A673 (cell line): ENCODE measurements at regions of chr2 and their contacts with region 1.

Region 1: DNA sequence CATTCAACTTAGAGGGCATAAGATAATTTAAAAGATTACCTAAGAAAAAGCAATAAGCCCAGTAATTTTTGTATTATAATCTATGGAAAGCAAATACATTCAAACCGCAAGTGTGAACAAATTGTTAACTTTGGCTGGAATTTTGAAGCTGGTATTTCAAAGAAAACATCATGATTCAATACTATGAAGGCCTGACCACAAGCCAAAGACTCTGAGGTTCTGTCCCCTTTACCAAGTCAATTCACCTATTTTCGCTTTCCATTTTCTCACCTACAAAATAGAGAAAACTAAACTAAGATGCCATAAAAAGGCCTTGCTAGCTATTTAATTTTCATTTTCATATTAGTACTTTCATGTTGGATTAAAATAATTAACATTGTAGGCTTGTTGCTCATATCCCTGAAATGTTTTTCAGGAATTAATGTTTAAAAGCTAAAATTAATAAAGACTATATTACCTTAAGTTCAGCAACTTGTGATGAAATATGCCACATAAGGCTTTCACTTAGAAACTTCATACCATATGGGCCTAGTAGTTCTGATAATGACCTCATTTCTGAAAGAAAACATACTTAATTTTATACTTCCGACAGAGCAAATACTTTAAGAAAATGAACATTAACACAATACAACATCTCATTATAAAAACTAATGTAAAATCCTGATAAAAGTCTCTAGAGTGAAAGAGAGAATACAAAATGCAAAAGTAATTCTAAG is 85.7 kb upstream of the FRZB start:
- DNase-seq: no peak
- H3K4me3 ChIP-seq: no peak overlapping the region
- H3K27ac ChIP-seq: peak overlapping the region; percentile 43
- H3K4me1 ChIP-seq: peaks cover 55% of the 10 kb centered on the region
- H3K27me3 ChIP-seq: no peaks in the 10 kb centered on the region
- CTCF ChIP-seq: no peak

Region 2: DNA sequence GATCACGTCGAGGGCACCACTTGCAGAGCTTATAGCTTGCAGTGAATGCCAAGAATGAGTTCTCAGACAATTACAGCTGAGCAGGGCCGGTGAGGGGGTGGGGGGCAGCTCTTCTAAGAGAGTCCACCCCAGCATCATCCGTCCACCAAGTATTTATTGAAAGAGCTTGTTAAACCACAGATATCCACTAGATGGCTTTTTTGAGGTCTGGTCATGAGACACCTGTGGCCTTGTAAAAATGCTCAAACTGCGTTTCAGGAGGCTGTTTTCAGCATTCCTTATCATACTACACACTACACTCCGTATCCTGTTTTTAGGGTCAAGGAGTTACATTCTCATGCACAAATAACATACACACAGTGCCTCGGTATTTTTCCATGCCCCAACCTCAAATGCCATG is 184.5 kb before region 1 on chr2:
- CTCF ChIA-PET with region 1: no interaction called
- POLR2A ChIA-PET with region 1: no interaction called
- intact Hi-C with region 1: no loop called
- DNase-seq: peak; percentile 43
- H3K4me3 ChIP-seq: no peak overlapping the region
- H3K27ac ChIP-seq: no peak overlapping the region
- H3K4me1 ChIP-seq: no peaks in the 10 kb centered on the region
- H3K27me3 ChIP-seq: no peaks in the 10 kb centered on the region
- CTCF ChIP-seq: peak; percentile 50

Region 3: DNA sequence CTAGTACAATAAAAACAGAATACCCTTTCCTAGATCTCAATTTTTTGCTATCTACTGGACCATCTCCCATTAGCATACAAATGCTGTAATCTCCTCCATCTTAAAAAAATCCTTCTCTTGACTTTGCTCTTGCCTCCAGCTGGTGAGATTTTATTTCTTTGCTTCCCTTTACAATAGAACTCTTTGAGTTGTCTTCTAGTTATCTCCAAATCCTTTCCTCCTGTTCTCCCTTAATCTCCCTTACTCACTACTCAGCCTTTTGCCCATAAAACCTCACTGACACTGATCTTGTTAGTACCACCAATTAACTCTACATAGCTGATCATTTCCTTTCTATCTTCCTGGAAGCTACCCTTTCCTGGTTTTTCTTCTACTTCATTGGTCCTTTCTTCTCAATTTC is 22.1 kb before region 1 on chr2:
- CTCF ChIA-PET with region 1: no interaction called
- POLR2A ChIA-PET with region 1: no interaction called
- intact Hi-C with region 1: loop called (anchors 2 kb)
- DNase-seq: peak; percentile 96
- H3K4me3 ChIP-seq: no peak overlapping the region
- H3K27ac ChIP-seq: peak overlapping the region; percentile 80
- H3K4me1 ChIP-seq: peaks cover 80% of the 10 kb centered on the region
- H3K27me3 ChIP-seq: no peaks in the 10 kb centered on the region
- CTCF ChIP-seq: no peak